Activated naive CD4-positive, alpha-beta T cell treated with anti-CD3 and anti-CD28 coated beads for 36 hours (primary cell): ENCODE measurements at regions of chr5 and their contacts with region 1.

Region 1: DNA sequence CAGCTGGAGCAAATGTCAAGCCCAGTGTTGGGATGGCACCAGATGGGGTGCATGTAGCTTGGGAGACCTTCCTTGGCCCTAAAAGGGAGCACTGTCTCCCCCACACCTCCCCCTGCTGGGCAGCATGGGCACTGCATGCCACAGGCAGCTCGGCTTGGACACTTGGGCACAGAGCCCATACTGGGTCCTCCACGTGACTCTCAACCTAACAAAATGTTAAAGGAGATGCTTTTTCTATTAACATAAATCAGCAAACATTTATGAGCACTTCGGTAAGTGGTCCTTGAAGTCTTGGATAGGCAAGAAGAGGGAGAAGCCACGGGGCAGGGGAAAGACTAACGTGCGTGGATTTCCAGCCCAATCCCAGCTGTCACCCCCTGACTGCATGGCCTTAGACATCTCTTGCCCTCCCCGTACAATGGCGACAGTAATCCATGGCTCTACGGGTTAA is 23.9 kb upstream of the MAPK9 start:
- DNase-seq: peak; percentile 81
- H3K4me3 Mint-ChIP-seq: no peak overlapping the region
- H3K27ac Mint-ChIP-seq: no peak overlapping the region
- H3K4me1 Mint-ChIP-seq: no peaks in the 10 kb centered on the region
- H3K27me3 Mint-ChIP-seq: no peaks in the 10 kb centered on the region

Region 2: GRCh38 chr5:180117000-180117725 is 198.6 kb before region 1 on chr5:
- CTCF ChIA-PET with region 1: no interaction called
- intact Hi-C with region 1: no loop called
- DNase-seq: no peak
- H3K4me3 Mint-ChIP-seq: no peak overlapping the region
- H3K27ac Mint-ChIP-seq: no peak overlapping the region
- H3K4me1 Mint-ChIP-seq: no peaks in the 10 kb centered on the region
- H3K27me3 Mint-ChIP-seq: no peaks in the 10 kb centered on the region

Region 3: DNA sequence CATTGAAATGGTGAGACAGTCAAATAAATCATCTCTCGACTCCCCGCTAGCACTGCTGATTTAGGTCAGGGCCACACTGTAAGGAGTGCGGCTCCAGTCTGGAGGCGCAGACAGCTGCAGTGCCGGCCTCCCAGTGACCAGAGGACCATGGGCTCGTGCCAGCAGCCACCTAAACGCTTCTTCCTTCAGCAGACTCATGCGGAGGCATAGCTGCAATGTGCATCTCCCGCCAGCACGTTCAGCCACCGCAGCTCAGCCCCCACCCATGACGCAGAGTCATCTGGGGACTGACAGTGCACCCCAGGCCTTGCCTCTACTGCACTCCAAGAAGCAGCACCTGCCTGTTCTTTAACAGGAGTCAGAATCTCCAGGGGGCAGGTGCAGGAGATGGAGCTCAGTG is 10.3 kb before region 1 on chr5:
- CTCF ChIA-PET with region 1: interaction called, 12 read pairs
- intact Hi-C with region 1: no loop called
- DNase-seq: no peak
- H3K4me3 Mint-ChIP-seq: no peak overlapping the region
- H3K27ac Mint-ChIP-seq: no peak overlapping the region
- H3K4me1 Mint-ChIP-seq: no peaks in the 10 kb centered on the region
- H3K27me3 Mint-ChIP-seq: no peaks in the 10 kb centered on the region

Region 4: GRCh38 chr5:180328296-180329137 is 12.7 kb after region 1 on chr5:
- CTCF ChIA-PET with region 1: interaction called, 45 read pairs
- intact Hi-C with region 1: no loop called
- DNase-seq: peak; percentile 93
- H3K4me3 Mint-ChIP-seq: no peak overlapping the region
- H3K27ac Mint-ChIP-seq: no peak overlapping the region
- H3K4me1 Mint-ChIP-seq: no peaks in the 10 kb centered on the region
- H3K27me3 Mint-ChIP-seq: peaks cover 14% of the 10 kb centered on the region

Region 5: DNA sequence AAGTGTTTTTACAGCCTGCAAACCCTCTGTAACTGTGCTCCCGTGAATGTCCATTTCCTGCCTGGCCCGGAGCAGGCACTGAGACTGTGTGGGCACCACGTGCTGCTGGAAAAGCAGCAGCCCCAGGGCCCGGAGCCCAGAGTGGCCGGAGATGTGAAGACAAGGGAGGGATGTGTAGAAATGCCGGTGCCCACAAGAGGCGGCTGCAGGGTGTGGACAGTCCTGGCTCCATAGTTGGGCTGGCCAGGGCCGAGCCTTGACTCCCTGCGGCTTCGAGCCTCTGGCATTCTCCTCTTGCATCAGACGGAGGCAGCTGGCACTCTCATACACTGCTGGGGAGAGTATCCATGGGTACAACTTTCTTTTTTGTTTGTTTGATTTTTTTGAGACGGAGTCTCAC is 50.5 kb after region 1 on chr5:
- CTCF ChIA-PET with region 1: no interaction called
- intact Hi-C with region 1: no loop called
- DNase-seq: no peak
- H3K4me3 Mint-ChIP-seq: no peak overlapping the region
- H3K27ac Mint-ChIP-seq: no peak overlapping the region
- H3K4me1 Mint-ChIP-seq: no peaks in the 10 kb centered on the region
- H3K27me3 Mint-ChIP-seq: no peaks in the 10 kb centered on the region